ENCODE measurements at regions of chr19 and their contacts with region 1.

Region 1: GRCh38 chr19:5790573-5791520 is at the start of gene DUS3L:
- DNase-seq: peak; percentile 98
- ATAC-seq: peak; percentile 99
- H3K4me3 ChIP-seq: peak within 1 kb of the TSS; percentile 56
- H3K27ac ChIP-seq: peak within 1 kb of the TSS; percentile 73
- H3K4me1 ChIP-seq: 0 out of 2 replicates have a peak, but pooled peaks cover 2% of the 10 kb centered on the region
- H3K27me3 ChIP-seq: no peaks in the 10 kb centered on the region
- CTCF ChIP-seq: no peak
- POLR2A ChIP-seq: peak; percentile 89
- RAD21 ChIP-seq: no peak
- total RNA-seq, gene DUS3L: 12.4 and 14.2 TPM in 2 replicates

Region 2: DNA sequence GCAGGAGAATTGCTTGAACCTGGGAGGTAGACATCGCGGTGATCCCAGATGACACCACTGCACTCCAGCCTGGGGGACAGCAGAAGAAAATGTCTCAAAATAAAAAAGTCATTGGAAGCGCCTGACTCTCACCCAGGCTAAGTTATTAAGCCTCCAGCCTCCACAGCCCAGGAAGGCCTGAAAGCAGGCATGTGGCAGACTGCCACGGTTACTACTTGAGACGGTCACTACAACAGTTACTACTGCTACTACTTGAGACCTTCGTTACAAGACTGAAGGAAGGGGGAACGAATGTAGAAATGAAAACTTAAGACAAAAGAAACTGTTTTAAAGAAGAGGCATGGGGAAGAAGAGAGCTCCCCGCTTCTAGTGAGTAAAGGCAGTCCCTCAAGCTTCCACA is 15.9 kb before region 1 on chr19:
- CTCF ChIA-PET with region 1: no interaction called
- POLR2A ChIA-PET with region 1: no interaction called
- dilution Hi-C with region 1: no loop called
- in situ Hi-C with region 1: no loop called
- intact Hi-C with region 1: loop called (anchors 1 kb)
- DNase-seq: peak; percentile 8
- ATAC-seq: no peak
- H3K4me3 ChIP-seq: no peak overlapping the region
- H3K27ac ChIP-seq: no peak overlapping the region
- H3K4me1 ChIP-seq: peaks cover 4% of the 10 kb centered on the region
- H3K27me3 ChIP-seq: no peaks in the 10 kb centered on the region
- CTCF ChIP-seq: no peak
- POLR2A ChIP-seq: no peak
- RAD21 ChIP-seq: no peak

Region 3: GRCh38 chr19:6460101-6460853 is 669.4 kb after region 1 on chr19:
- CTCF ChIA-PET with region 1: no interaction called
- POLR2A ChIA-PET with region 1: no interaction called
- dilution Hi-C with region 1: no loop called
- in situ Hi-C with region 1: no loop called
- intact Hi-C with region 1: loop called (anchors 10 kb)
- DNase-seq: peak; percentile 97
- ATAC-seq: peak; percentile 92
- H3K4me3 ChIP-seq: peak overlapping the region; percentile 61
- H3K27ac ChIP-seq: peak overlapping the region; percentile 4; the same call in 1 of the 2 replicates
- H3K4me1 ChIP-seq: peaks cover 3% of the 10 kb centered on the region; the same call in 1 of the 2 replicates
- H3K27me3 ChIP-seq: peaks cover 17% of the 10 kb centered on the region
- CTCF ChIP-seq: peak; percentile 46
- POLR2A ChIP-seq: no peak
- RAD21 ChIP-seq: no peak